ENCODE measurements at regions of chr17 and their contacts with region 1.

Region 1: DNA sequence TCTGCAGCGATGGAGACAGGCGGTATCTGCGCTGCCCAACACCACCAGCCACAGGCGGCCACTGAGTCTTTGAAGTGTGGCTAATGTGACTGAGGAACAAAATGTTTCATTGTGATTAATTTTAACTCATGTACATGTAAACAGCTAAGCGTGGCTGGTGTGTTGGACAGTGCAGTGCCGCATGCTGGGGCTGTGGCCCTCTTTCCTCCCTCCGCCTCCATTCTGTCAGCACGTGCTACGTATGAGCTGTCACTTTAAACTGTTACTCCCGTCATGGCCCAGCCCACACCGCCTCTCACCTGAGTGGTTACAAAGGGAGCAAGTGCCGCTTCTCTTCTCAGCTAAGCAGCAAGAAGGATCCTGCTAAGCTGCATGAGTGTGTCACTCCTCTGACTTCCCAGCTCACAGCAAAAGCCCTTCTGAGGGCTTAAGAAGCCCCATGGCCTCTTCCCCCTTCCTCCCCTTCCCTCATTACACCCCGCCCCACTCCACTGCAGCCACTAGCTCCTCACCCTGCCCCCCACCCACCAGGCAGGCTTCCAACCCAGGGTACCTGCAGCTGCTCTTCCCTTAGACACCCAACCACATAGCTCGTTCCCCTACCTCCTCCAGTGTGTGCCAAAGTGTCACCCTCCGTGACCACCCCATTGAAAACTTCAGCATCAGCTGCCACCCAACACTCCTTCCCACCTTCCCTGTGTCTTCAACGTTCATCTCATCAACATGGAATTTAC is 15.0 kb downstream of the HASPIN start:
- DNase-seq: peak; percentile 87
- H3K4me3 Mint-ChIP-seq: peak overlapping the region; percentile 25
- H3K27ac Mint-ChIP-seq: peak overlapping the region; percentile 4
- H3K4me1 Mint-ChIP-seq: peaks cover 32% of the 10 kb centered on the region
- H3K27me3 Mint-ChIP-seq: no peaks in the 10 kb centered on the region

Region 2: DNA sequence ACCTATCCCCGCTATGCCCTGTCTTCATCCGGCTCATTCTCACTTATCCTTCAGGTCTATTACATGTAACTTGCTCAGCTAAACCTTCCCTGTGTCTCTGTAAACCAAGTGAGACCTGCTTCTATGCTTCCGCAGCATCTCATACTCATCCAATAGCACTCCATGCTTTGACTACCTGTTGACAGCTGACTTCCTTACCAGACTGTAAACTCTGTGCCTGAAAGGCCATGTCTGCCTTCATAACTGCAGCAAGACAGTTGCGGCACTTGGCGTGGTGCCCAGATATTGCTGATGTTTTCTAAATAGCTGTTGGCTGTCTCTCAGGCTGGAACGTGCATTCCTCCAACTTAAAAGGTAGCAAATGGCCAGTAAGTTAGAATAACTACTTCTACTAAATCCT is 338.7 kb before region 1 on chr17:
- CTCF ChIA-PET with region 1: no interaction called
- intact Hi-C with region 1: no loop called
- DNase-seq: no peak
- H3K4me3 Mint-ChIP-seq: no peak overlapping the region
- H3K27ac Mint-ChIP-seq: no peak overlapping the region
- H3K4me1 Mint-ChIP-seq: no peaks in the 10 kb centered on the region
- H3K27me3 Mint-ChIP-seq: peaks cover 11% of the 10 kb centered on the region

Region 3: GRCh38 chr17:3683054-3683511 is 55.6 kb before region 1 on chr17:
- CTCF ChIA-PET with region 1: interaction called, 27 read pairs
- intact Hi-C with region 1: loop called (anchors 2 kb)
- DNase-seq: peak; percentile 72
- H3K4me3 Mint-ChIP-seq: no peak overlapping the region
- H3K27ac Mint-ChIP-seq: no peak overlapping the region
- H3K4me1 Mint-ChIP-seq: peaks cover 7% of the 10 kb centered on the region
- H3K27me3 Mint-ChIP-seq: no peaks in the 10 kb centered on the region

Region 4: GRCh38 chr17:3754458-3755334 is 16.0 kb after region 1 on chr17:
- CTCF ChIA-PET with region 1: interaction called, 20 read pairs
- intact Hi-C with region 1: loop called (anchors 2 kb)
- DNase-seq: peak; percentile 80
- H3K4me3 Mint-ChIP-seq: peak overlapping the region; percentile 63
- H3K27ac Mint-ChIP-seq: no peak overlapping the region
- H3K4me1 Mint-ChIP-seq: peaks cover 23% of the 10 kb centered on the region
- H3K27me3 Mint-ChIP-seq: no peaks in the 10 kb centered on the region

Region 5: GRCh38 chr17:3804503-3804931 is 65.8 kb after region 1 on chr17:
- CTCF ChIA-PET with region 1: interaction called, 16 read pairs
- intact Hi-C with region 1: loop called (anchors 5 kb)
- DNase-seq: peak; percentile 35
- H3K4me3 Mint-ChIP-seq: no peak overlapping the region
- H3K27ac Mint-ChIP-seq: no peak overlapping the region
- H3K4me1 Mint-ChIP-seq: peaks cover 14% of the 10 kb centered on the region
- H3K27me3 Mint-ChIP-seq: no peaks in the 10 kb centered on the region

Region 6: GRCh38 chr17:3835410-3836229 is 96.9 kb after region 1 on chr17:
- CTCF ChIA-PET with region 1: interaction called, 12 read pairs
- intact Hi-C with region 1: no loop called
- DNase-seq: no peak
- H3K4me3 Mint-ChIP-seq: no peak overlapping the region
- H3K27ac Mint-ChIP-seq: no peak overlapping the region
- H3K4me1 Mint-ChIP-seq: peaks cover 8% of the 10 kb centered on the region
- H3K27me3 Mint-ChIP-seq: no peaks in the 10 kb centered on the region

Region 7: DNA sequence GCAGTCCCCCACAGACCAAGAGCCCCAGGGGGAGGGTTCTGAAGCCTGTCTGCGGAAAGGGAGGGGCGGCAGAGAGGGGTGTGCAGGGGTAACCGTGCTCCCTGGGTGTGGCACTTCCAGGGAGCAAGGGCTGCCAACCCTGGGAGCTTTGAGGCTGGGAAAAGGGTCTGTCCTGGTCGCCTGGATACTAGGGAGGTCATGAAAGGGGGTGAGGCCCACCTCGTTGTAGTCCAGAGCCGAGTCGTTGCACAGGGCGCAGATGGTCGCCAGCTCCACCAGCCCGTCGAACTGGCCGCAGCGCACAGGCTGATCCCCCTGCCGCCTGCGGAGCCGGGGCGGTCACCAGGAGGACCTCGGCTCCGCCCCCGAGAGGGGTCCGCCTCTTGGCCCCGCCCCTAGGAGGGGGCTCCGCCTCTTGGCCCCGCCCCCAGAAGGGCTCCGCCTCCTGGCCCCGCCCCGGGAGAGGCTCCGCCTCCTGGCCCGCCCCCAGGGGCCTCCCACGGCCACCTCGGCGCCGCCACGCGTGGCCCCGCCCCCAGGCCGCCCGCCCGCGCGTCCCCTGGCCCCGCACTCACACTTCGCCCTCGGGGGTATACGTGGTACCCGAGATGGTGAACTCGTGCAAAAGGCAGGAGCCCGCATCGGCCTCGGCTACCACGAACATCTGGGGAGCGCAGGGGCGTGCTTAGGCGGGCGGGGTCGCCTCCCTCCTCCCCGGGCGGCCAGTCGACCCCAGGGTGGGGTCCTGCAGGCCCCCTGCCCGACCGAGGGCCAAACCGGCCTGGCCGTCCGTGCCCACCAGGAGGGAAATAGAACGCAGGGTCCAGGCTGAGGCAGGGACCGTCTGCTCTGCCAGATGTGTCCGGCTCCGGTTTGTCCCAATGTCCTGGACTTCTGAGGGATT is 206.0 kb after region 1 on chr17:
- CTCF ChIA-PET with region 1: no interaction called
- intact Hi-C with region 1: no loop called
- DNase-seq: peak; percentile 39
- H3K4me3 Mint-ChIP-seq: no peak overlapping the region
- H3K27ac Mint-ChIP-seq: no peak overlapping the region
- H3K4me1 Mint-ChIP-seq: no peaks in the 10 kb centered on the region
- H3K27me3 Mint-ChIP-seq: no peaks in the 10 kb centered on the region

Region 8: GRCh38 chr17:4004517-4005295 is 266.0 kb after region 1 on chr17:
- CTCF ChIA-PET with region 1: no interaction called
- intact Hi-C with region 1: loop called (anchors 10 kb)
- DNase-seq: peak; percentile 62
- H3K4me3 Mint-ChIP-seq: no peak overlapping the region
- H3K27ac Mint-ChIP-seq: no peak overlapping the region
- H3K4me1 Mint-ChIP-seq: peaks cover 4% of the 10 kb centered on the region
- H3K27me3 Mint-ChIP-seq: no peaks in the 10 kb centered on the region

Region 9: GRCh38 chr17:4087906-4088693 is 349.4 kb after region 1 on chr17:
- CTCF ChIA-PET with region 1: no interaction called
- intact Hi-C with region 1: no loop called
- DNase-seq: no peak
- H3K4me3 Mint-ChIP-seq: no peak overlapping the region
- H3K27ac Mint-ChIP-seq: no peak overlapping the region
- H3K4me1 Mint-ChIP-seq: peaks cover 13% of the 10 kb centered on the region
- H3K27me3 Mint-ChIP-seq: no peaks in the 10 kb centered on the region

Measured in activated naive CD4-positive, alpha-beta T cell treated with anti-CD3 and anti-CD28 coated beads for 36 hours (primary cell).